ENCODE measurements at regions of chr3 and their contacts with region 1.

Region 1: DNA sequence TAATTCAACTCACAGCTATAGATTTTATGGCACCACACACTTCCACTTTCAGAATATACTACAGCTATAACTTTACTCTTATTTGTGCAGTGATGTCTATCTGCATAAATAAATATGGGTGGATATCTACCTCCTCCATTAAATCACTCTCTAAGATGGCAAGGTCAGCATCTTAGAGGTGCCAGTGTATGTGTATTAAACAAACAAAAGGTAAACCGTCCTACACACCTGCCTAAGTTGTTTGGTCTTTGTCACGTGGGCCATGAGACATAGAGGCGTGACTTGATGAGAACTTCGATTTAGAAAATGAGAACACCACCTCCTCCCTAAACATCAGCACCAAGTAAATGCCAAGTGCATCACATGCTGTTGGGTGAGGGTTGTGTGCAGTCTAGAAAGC is 310.6 kb downstream of the GRM7 start:
- DNase-seq: no peak
- ATAC-seq: no peak
- H3K4me3 ChIP-seq: no peak overlapping the region
- H3K27ac ChIP-seq: no peak overlapping the region
- H3K4me1 ChIP-seq: peaks cover 0 to 3% (median 0%) of the 10 kb centered on the region in 9 donors
- H3K27me3 ChIP-seq: no peaks in the 10 kb centered on the region
- CTCF ChIP-seq: no peak

Region 2: GRCh38 chr3:7428319-7428718 is 256.9 kb after region 1 on chr3:
- intact Hi-C with region 1: loop called in 1 of 10 experiments (anchors 5 kb)
- DNase-seq: no peak
- ATAC-seq: no peak
- H3K4me3 ChIP-seq: no peak overlapping the region
- H3K27ac ChIP-seq: no peak overlapping the region
- H3K4me1 ChIP-seq: no peaks in the 10 kb centered on the region
- H3K27me3 ChIP-seq: no peaks in the 10 kb centered on the region
- CTCF ChIP-seq: no peak

Measured in heart right ventricle (tissue), 16 donors.